ENCODE measurements at regions of chr12 and their contacts with region 1.

Region 1: DNA sequence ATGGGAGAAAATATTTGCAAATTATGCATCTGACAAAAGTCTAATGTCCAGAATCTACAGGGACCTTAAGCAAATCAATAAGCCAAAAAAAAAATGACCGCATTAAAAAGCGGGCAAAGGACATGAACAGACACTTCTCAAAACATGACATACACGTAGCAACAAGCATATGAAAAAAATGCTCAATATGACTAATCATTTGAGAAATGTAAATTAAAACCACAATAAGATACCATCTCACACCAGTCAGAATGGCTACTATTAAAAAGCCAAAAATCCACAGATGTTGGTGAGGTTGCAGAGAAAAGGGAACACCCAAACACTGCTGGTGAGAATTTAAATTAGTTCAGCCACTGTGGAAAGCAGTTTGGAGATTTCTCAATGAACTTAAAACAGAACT is 16.1 kb downstream of the PAWR start:
- DNase-seq: no peak
- H3K4me3 ChIP-seq: no peak overlapping the region
- H3K27ac ChIP-seq: no peak overlapping the region
- H3K4me1 ChIP-seq: peaks cover 19% of the 10 kb centered on the region
- CTCF ChIP-seq: no peak

Region 2: DNA sequence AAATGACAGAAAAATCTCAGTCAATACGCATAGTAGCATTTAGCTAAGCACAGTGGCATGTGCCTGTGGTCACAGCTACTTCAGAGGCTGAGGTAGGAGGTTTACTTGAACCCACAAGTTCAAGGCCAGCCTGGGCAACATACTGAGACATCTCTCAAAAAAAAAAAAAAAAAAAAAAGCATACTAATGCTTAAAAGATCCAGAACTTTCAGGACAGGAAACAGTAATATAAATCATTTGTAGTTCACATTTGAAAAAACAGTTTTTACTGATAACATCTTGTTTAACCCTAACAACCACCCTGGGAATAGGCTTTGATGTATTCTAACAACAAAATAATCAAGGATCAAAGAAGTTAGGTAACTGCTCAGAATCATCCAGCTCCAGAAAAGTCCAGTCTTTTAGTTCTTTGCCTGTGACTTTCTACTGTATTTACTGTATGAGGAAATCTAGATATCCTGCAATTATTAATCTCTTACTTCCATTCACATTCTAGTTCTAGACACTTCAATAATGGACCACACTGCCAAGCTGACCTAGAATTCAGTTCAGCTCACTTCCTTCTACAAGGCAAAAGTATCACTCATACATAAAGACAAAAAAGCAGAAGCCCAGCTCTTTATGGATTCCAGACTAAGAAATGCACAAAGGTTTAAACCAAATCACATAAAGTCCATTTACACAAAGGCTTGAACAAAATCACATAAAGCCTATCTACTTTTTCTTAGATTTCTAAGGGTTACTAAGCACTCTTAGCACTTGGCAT is 12.4 kb before region 1 on chr12:
- CTCF ChIA-PET with region 1: no interaction called
- POLR2A ChIA-PET with region 1: interaction called, 10 read pairs
- intact Hi-C with region 1: no loop called
- DNase-seq: no peak
- H3K4me3 ChIP-seq: no peak overlapping the region
- H3K27ac ChIP-seq: no peak overlapping the region
- H3K4me1 ChIP-seq: no peaks in the 10 kb centered on the region
- CTCF ChIP-seq: no peak

Measured in OCI-LY7 (cell line).